Activated CD4-positive, alpha-beta T cell treated with anti-CD3 and anti-CD28 coated beads for 36 hours (primary cell): ENCODE measurements at regions of chr5 and their contacts with region 1.

Region 1: DNA sequence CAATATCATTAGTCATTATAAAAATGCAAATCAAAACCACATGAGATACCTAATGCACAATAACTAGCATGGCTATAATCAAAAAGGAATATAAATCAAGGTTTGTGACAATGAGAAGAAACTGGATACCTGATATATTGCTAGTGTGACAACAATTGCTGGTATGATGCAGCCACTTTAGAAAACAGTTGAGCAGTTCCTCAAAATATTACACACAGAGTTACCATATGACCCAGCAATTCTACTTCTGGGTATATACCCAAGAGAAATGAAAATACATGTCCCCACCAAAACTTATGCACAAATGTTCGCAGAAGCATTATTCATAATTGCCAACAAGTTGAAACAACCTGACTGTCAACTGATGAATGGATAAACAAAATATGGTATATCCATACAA is 339.7 kb upstream of the POU5F2 start:
- DNase-seq: no peak
- ATAC-seq: no peak
- H3K4me3 Mint-ChIP-seq: no peak overlapping the region
- H3K27ac Mint-ChIP-seq: no peak overlapping the region
- H3K4me1 Mint-ChIP-seq: peaks cover 16% of the 10 kb centered on the region
- H3K27me3 Mint-ChIP-seq: no peaks in the 10 kb centered on the region

Region 2: DNA sequence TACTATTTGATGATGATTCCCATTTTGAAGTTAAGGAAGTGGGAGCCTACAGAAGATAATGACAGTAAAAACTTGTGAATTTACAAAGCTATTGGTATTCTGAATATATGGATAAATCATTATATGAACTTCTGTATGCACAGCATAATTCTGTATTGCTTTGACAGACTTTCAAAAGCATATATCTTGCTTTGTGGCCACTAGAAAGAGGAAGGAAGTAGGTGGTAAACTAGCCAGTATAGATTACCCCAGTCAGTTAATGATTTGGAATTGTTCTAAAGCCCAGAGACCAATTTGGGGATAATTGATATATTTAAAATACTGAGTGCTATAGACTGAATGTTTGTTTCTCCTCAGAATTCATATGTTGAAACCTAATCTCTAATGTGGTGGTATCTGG is 445.1 kb before region 1 on chr5:
- CTCF ChIA-PET with region 1: no interaction called
- POLR2A ChIA-PET with region 1: interaction called, 13 read pairs
- intact Hi-C with region 1: no loop called
- DNase-seq: no peak
- ATAC-seq: no peak
- H3K4me3 Mint-ChIP-seq: no peak overlapping the region
- H3K27ac Mint-ChIP-seq: no peak overlapping the region
- H3K4me1 Mint-ChIP-seq: no peaks in the 10 kb centered on the region
- H3K27me3 Mint-ChIP-seq: no peaks in the 10 kb centered on the region

Region 3: DNA sequence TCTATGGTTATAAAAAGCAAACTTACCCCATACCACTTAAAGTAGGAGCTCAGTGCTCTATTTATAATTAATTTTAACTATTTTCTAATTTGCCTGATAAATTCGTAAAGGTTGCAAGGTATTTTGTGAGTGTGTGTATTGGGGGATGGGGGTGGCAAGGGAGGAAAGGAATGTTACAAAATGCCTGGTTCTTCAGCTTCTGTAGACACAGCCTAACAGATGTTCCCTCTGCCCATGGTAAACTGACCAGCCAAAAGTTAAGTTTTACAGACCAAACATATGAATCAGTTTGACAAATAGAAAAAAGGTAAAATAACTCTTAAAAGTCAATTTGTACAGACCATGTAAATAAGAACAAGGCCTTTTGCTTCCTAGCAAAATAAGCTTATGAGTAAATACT is 304.7 kb after region 1 on chr5:
- CTCF ChIA-PET with region 1: no interaction called
- POLR2A ChIA-PET with region 1: no interaction called
- intact Hi-C with region 1: no loop called
- DNase-seq: no peak
- ATAC-seq: no peak
- H3K4me3 Mint-ChIP-seq: no peak overlapping the region
- H3K27ac Mint-ChIP-seq: no peak overlapping the region
- H3K4me1 Mint-ChIP-seq: peaks cover 7% of the 10 kb centered on the region
- H3K27me3 Mint-ChIP-seq: no peaks in the 10 kb centered on the region